GM12878 (cell line): ENCODE measurements at regions of chr11 and their contacts with region 1.

Region 1: DNA sequence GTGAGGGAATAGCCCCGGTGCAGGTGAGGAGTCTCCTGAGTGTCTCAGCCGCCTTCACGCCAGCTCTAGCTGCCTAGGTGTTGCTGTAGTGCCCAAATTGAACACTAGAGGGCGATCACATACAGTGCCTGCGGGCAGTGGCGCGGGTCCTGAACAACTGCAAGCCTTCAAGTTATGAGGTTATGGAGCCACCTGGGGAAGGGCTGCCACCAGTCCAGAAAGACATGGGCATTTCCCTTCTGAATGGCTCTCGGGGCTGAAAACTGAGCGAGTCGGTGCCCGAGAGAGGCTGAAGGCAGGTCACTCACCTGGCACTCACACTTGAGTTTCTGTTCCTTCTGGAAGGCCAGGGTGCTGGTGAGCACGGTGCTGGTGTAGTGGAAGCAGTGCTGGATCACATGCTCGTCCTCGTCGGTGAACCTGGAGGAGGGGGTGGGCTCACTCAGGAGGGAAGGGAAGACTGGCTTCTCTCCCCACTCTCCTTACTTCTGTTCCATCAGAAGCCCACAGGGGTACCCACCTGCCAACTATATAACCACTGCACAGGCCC is 88.4 kb downstream of the PDE2A start:
- DNase-seq: peak; percentile 12
- ATAC-seq: peak; percentile 93
- H3K4me3 ChIP-seq: no peak overlapping the region
- H3K27ac ChIP-seq: no peak overlapping the region
- H3K4me1 ChIP-seq: no peaks in the 10 kb centered on the region
- H3K27me3 ChIP-seq: peaks cover 10 to 11% of the 10 kb centered on the region in 2 experiments
- CTCF ChIP-seq: peak; percentile 86 to 97 (median 88)
- EP300 ChIP-seq: no peak
- POLR2A ChIP-seq: no peak
- RAD21 ChIP-seq: peak; percentile 81

Region 2: GRCh38 chr11:72553706-72554105 is 32.1 kb before region 1 on chr11:
- CTCF ChIA-PET with region 1: no interaction called
- POLR2A ChIA-PET with region 1: no interaction called
- RAD21 ChIA-PET with region 1: no interaction called
- SMC1A ChIA-PET with region 1: no interaction called
- in situ Hi-C with region 1: no loop called
- intact Hi-C with region 1: no loop called
- DNase-seq: no peak
- ATAC-seq: peak; percentile 62
- H3K4me3 ChIP-seq: no peak overlapping the region
- H3K27ac ChIP-seq: no peak overlapping the region
- H3K4me1 ChIP-seq: no peaks in the 10 kb centered on the region
- H3K27me3 ChIP-seq: peaks cover 0 to 3% of the 10 kb centered on the region in 2 experiments; a peak in 1 of 4 replicates
- CTCF ChIP-seq: peak; percentile 34 to 46 (median 39); a peak in 5 of 6 replicates
- EP300 ChIP-seq: no peak
- POLR2A ChIP-seq: no peak
- RAD21 ChIP-seq: peak; percentile 43

Region 3: DNA sequence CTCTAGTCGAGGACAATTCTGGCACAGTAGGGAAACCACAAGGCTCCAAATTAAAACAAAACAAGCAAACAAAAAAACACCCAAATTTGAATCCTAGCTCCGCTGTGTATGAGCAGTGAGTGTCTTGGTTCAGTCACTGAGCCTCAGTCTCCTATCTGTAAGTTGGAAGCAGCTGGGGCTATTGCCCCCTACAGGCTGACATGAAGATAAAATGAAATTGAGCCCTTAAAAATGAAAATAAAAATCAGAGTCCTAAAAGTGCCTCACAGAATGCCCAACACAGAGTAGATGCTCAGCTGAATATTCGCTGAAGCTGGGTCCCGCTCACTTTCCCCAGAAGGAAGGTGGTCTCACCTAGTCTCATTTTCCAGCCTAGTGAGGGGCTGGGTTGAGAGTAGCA is 23.2 kb after region 1 on chr11:
- CTCF ChIA-PET with region 1: interaction called, 13 read pairs
- POLR2A ChIA-PET with region 1: no interaction called
- RAD21 ChIA-PET with region 1: no interaction called
- SMC1A ChIA-PET with region 1: interaction called, 5 read pairs
- in situ Hi-C with region 1: no loop called
- intact Hi-C with region 1: no loop called
- DNase-seq: no peak
- ATAC-seq: peak; percentile 55
- H3K4me3 ChIP-seq: no peak overlapping the region
- H3K27ac ChIP-seq: no peak overlapping the region
- H3K4me1 ChIP-seq: peaks cover 6% of the 10 kb centered on the region
- H3K27me3 ChIP-seq: peaks cover 0 to 2% of the 10 kb centered on the region in 2 experiments; a peak in 3 of 4 replicates
- CTCF ChIP-seq: peak; percentile 42 to 68 (median 49)
- EP300 ChIP-seq: no peak
- POLR2A ChIP-seq: no peak
- RAD21 ChIP-seq: 0 out of 2 replicates have a peak, but pooled peaks have one; percentile 16

Region 4: GRCh38 chr11:72648384-72649136 is 62.7 kb after region 1 on chr11:
- CTCF ChIA-PET with region 1: interaction called, 16 read pairs
- POLR2A ChIA-PET with region 1: no interaction called
- RAD21 ChIA-PET with region 1: interaction called, 12 read pairs
- SMC1A ChIA-PET with region 1: interaction called, 7 read pairs
- in situ Hi-C with region 1: loop called (anchors 5 kb)
- intact Hi-C with region 1: loop called (anchors 1 kb)
- DNase-seq: no peak
- ATAC-seq: no peak
- H3K4me3 ChIP-seq: no peak overlapping the region
- H3K27ac ChIP-seq: no peak overlapping the region
- H3K4me1 ChIP-seq: no peaks in the 10 kb centered on the region
- H3K27me3 ChIP-seq: no peaks in the 10 kb centered on the region
- CTCF ChIP-seq: no peak
- EP300 ChIP-seq: no peak
- POLR2A ChIP-seq: no peak
- RAD21 ChIP-seq: no peak

Region 5: GRCh38 chr11:72683782-72684200 is 98.0 kb after region 1 on chr11:
- CTCF ChIA-PET with region 1: interaction called, 130 read pairs
- POLR2A ChIA-PET with region 1: no interaction called
- RAD21 ChIA-PET with region 1: interaction called, 32 read pairs
- SMC1A ChIA-PET with region 1: interaction called, 10 read pairs
- in situ Hi-C with region 1: no loop called
- intact Hi-C with region 1: loop called (anchors 1 kb)
- DNase-seq: no peak
- ATAC-seq: peak; percentile 83
- H3K4me3 ChIP-seq: no peak overlapping the region
- H3K27ac ChIP-seq: no peak overlapping the region
- H3K4me1 ChIP-seq: no peaks in the 10 kb centered on the region
- H3K27me3 ChIP-seq: no peaks in the 10 kb centered on the region
- CTCF ChIP-seq: peak; percentile 89 to 99 (median 98)
- EP300 ChIP-seq: no peak
- POLR2A ChIP-seq: peak; percentile 49; the same call in 1 of the 2 replicates
- RAD21 ChIP-seq: peak; percentile 84